ENCODE measurements at regions of chr11 and their contacts with region 1.

Region 1: DNA sequence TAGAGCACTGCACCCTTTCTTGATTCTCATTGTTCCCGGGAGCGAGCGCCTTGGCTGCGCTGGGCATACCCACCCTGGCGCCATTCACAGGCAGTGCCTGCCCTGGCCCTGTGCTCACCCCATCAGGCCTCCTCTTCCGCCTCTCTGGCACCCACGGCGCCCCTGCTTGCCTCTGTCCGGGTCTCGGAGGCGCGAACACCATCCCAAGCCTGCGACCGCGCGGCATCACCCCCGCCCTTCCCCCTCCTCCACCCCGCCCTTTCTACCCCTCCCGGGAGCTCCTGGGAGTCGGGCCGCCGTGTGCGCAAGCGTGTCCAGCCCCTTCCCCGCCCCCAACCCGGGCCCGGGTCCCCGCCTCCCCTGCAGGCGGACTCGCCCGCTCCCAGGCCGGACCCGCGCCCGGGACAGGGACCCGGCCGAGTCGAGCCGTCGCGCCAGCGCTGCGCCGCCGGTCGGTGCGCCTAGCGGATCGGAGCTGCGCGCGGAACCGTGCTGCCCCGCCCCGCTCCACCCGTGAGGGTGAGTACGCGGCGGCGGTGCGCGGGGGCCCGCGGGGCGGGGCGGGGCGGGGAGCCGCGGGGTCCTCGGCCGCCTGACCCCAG is at the start of gene ST3GAL4:
- DNase-seq: peak; percentile 83
- H3K4me3 ChIP-seq: peak within 1 kb of the TSS; percentile 80
- H3K27ac ChIP-seq: peak within 1 kb of the TSS; percentile 66
- H3K4me1 ChIP-seq: peaks cover 39% of the 10 kb centered on the region
- CTCF ChIP-seq: no peak
- total RNA-seq, gene ST3GAL4: 10.0 and 14.3 TPM in 2 replicates

Region 2: DNA sequence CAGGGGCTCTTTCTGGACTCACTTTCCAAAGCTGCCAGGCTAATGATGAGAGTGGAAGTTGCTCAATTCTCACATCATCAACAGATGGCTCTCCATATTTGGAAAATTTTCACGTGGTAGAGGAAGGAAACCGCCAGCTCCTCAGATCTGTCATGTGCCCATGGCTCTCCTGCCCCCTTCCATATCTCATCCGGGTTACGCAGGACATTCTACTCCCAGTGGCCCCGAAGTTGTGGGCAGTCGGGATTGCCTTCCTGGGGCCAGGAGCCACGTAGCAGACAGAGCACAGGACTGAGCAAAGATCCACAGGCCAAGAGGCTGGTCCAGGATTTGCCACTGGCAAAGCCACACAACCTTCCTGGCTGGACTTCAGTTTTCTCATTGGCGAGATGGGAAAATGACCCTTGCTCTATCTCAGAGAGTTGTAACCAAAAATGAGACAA is 182.8 kb before region 1 on chr11:
- CTCF ChIA-PET with region 1: no interaction called
- POLR2A ChIA-PET with region 1: no interaction called
- intact Hi-C with region 1: no loop called
- DNase-seq: no peak
- H3K4me3 ChIP-seq: no peak overlapping the region
- H3K27ac ChIP-seq: no peak overlapping the region
- H3K4me1 ChIP-seq: no peaks in the 10 kb centered on the region
- CTCF ChIP-seq: no peak

Region 3: GRCh38 chr11:126303623-126304456 is 51.6 kb before region 1 on chr11 and contains the start of gene DCPS:
- CTCF ChIA-PET with region 1: interaction called, 3 read pairs
- POLR2A ChIA-PET with region 1: interaction called, 4 read pairs
- intact Hi-C with region 1: loop called (anchors 2 kb)
- DNase-seq: peak; percentile 89
- H3K4me3 ChIP-seq: peak within 1 kb of the TSS; percentile 92
- H3K27ac ChIP-seq: peak within 1 kb of the TSS; percentile 71
- H3K4me1 ChIP-seq: peaks cover 17% of the 10 kb centered on the region
- CTCF ChIP-seq: no peak
- total RNA-seq, gene DCPS: 24.2 and 30.4 TPM in 2 replicates